BJ (cell line): ENCODE measurements at regions of chr19 and their contacts with region 1.

Region 1: DNA sequence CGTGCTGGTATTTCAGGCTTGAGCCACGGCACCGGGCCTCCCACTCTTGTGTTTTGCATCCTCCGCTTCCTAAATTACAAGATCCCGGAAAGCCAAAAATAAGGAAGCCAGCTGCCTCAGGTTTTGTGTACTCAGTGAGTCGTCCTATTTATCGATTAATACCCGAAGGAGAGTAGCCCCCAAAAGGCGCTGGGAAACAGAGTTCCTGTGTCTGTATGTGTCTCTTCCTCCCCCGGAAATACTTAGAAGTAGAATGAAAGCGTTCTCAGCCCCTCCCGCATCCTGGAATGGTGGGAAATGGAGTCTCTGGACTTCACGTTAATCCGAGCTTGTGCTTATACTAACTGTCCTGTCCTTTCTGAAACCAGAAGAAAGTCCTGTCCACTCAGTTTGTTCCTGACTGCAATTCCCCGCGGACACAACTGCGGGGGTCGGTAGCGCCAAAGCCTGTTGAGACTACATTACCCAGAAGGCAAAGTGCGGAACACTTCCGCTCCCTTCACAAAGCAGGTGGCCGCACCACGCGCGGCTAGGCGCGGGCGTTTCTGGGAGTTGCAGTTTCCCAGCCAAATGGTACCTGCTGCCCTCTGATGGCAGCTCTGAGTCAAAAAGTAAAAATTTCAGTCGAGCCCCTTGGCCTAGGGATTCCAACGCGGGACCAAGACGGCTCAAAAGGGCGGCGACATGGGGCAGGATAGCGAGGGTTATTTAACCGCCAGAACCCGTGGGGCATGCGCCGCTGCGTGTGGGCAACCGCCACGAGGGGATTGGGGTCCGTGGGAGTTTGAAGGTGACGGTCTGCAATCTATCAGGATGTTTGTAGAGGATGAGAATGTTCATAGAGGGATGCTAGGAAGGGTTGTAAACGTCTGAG is 2.2 kb upstream of the GSK3A start:
- DNase-seq: peak; percentile 67
- H3K4me3 ChIP-seq: peak overlapping the region; percentile 73
- H3K27me3 ChIP-seq: no peaks in the 10 kb centered on the region
- CTCF ChIP-seq: peak; percentile 74

Region 2: DNA sequence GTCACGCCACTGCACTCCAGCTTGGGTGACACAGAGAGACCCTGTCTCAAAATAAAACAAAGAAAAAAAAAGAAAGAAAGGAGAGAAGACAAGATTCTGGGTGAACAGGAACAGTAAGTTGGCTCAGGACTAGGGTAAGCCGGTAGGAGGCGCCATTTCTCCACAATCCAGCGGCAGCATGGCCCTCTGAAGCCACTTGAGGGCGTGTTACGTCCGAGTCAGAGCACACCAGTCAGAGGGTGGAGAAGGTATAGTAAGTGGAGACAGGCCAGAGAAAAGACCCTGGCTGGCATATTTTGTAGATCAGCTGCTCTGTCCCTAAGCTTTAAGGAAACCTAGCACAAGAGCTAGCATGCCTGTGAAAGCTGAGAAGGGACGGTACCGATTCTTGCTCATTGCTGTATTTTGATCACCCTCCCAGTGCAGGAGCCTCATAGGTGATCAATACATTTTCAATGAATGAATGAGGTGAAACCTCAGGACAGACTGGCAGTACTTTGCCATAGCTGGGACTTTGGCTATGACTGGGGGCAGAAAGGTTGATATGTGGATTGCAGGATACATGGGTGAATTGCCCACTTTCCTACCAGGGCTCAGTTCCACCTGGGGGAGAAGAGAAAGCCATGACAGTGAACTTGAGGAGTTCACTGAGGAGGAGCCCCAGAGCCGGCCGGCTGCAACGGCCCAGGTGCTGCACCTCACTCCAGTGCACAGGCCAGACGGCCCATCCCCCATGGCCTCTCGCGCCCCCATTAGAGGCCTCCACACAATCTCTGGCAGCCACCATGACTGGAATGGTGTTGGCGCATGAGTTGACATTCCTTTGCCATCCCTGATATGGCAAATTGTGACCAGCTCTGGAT is 135.8 kb before region 1 on chr19:
- CTCF ChIA-PET with region 1: interaction called, 13 read pairs
- POLR2A ChIA-PET with region 1: no interaction called
- DNase-seq: no peak
- H3K4me3 ChIP-seq: no peak overlapping the region
- H3K27me3 ChIP-seq: no peaks in the 10 kb centered on the region
- CTCF ChIP-seq: peak; percentile 100

Region 3: DNA sequence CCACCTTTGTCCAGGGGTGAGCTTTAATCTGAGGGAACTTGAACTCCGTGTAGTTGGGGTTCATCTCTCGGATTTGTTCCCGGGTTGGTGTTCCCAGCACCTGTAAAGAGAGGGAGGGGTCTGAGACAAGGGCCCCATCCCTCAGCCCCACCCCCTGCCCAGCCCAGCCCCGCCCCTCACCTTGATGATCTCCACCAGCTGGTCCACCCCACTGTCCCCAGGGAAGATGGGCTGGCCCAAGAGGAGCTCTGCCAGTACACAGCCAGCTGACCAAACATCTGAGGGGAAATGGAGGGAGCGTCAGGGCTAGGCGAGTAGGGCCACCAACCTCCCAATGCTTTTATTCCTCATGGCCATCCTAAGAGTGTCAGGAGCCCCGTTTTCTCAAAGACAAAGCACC is 11.5 kb before region 1 on chr19:
- CTCF ChIA-PET with region 1: interaction called, 12 read pairs
- POLR2A ChIA-PET with region 1: no interaction called
- DNase-seq: no peak
- H3K4me3 ChIP-seq: no peak overlapping the region
- H3K27me3 ChIP-seq: no peaks in the 10 kb centered on the region
- CTCF ChIP-seq: no peak

Region 4: GRCh38 chr19:42268704-42269477 is 24.3 kb after region 1 on chr19 and contains the start of gene CIC:
- CTCF ChIA-PET with region 1: interaction called, 20 read pairs
- POLR2A ChIA-PET with region 1: interaction called, 3 read pairs
- DNase-seq: peak; percentile 100
- H3K4me3 ChIP-seq: peak within 1 kb of the TSS; percentile 87
- H3K27me3 ChIP-seq: no peaks in the 10 kb centered on the region
- CTCF ChIP-seq: no peak
- polyA plus RNA-seq, gene CIC: 3.5 and 7.0 TPM in 2 replicates

Region 5: DNA sequence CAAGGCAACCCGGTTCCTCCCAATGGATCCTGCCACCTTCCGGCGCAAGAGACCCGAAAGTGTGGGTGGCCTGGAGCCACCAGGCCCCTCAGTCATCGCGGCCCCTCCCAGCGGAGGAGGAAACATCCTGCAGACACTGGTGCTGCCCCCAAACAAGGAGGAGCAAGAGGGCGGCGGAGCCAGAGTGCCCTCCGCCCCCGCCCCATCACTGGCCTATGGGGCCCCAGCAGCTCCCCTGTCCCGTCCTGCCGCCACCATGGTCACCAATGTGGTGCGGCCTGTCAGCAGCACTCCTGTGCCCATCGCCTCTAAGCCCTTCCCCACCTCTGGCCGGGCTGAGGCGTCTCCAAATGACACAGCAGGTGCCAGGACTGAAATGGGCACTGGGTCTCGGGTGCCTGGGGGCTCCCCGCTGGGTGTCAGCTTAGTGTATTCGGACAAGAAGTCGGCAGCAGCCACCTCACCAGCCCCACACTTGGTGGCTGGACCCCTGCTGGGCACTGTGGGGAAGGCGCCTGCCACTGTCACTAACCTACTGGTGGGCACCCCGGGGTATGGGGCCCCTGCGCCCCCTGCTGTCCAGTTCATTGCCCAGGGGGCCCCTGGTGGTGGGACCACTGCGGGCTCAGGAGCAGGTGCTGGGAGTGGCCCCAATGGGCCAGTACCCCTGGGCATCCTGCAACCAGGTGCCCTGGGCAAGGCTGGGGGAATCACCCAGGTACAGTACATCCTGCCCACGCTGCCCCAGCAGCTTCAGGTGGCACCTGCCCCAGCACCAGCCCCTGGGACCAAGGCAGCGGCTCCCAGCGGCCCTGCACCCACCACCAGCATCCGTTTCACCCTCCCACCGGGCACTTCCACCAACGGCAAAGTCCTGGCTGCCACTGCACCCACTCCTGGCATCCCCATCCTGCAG is 46.2 kb after region 1 on chr19:
- CTCF ChIA-PET with region 1: interaction called, 109 read pairs
- POLR2A ChIA-PET with region 1: no interaction called
- DNase-seq: no peak
- H3K4me3 ChIP-seq: no peak overlapping the region
- H3K27me3 ChIP-seq: no peaks in the 10 kb centered on the region
- CTCF ChIP-seq: peak; percentile 52

Region 6: GRCh38 chr19:42323852-42324654 is 79.5 kb after region 1 on chr19:
- CTCF ChIA-PET with region 1: interaction called, 17 read pairs
- POLR2A ChIA-PET with region 1: no interaction called
- DNase-seq: no peak
- H3K4me3 ChIP-seq: no peak overlapping the region
- H3K27me3 ChIP-seq: peaks cover 22% of the 10 kb centered on the region
- CTCF ChIP-seq: no peak